ENCODE measurements at regions of chr2 and their contacts with region 1.

Region 1: GRCh38 chr2:241734467-241735208 is at the start of gene D2HGDH:
- DNase-seq: peak; percentile 97
- H3K4me3 ChIP-seq: peak within 1 kb of the TSS; percentile 66 to 93 (median 80)
- H3K27ac ChIP-seq: peak within 1 kb of the TSS; percentile 88 to 95 (median 93)
- H3K4me1 ChIP-seq: peaks cover 0 to 22% (median 12%) of the 10 kb centered on the region in 4 donors
- H3K27me3 ChIP-seq: no peaks in the 10 kb centered on the region
- CTCF ChIP-seq: no peak
- EP300 ChIP-seq: no peak
- POLR2A ChIP-seq: no peak
- total RNA-seq, gene D2HGDH: 10.7 to 26.9 (median 13.3) TPM

Region 2: GRCh38 chr2:240851078-240851991 is 883.3 kb before region 1 on chr2:
- intact Hi-C with region 1: loop called (anchors 5 kb)
- DNase-seq: peak; percentile 89
- H3K4me3 ChIP-seq: no peak overlapping the region
- H3K27ac ChIP-seq: no peak overlapping the region
- H3K4me1 ChIP-seq: no peaks in the 10 kb centered on the region
- H3K27me3 ChIP-seq: peaks cover 0 to 6% (median 0%) of the 10 kb centered on the region in 3 donors
- CTCF ChIP-seq: peak; percentile 83 to 96 (median 86)
- EP300 ChIP-seq: no peak
- POLR2A ChIP-seq: no peak

Region 3: GRCh38 chr2:241598480-241598879 is 136.2 kb before region 1 on chr2:
- intact Hi-C with region 1: no loop called
- DNase-seq: no peak
- H3K4me3 ChIP-seq: no peak overlapping the region
- H3K27ac ChIP-seq: no peak overlapping the region
- H3K4me1 ChIP-seq: no peaks in the 10 kb centered on the region
- H3K27me3 ChIP-seq: no peaks in the 10 kb centered on the region
- CTCF ChIP-seq: no peak
- EP300 ChIP-seq: no peak
- POLR2A ChIP-seq: no peak

Region 4: GRCh38 chr2:241692448-241692847 is 42.2 kb before region 1 on chr2:
- intact Hi-C with region 1: no loop called
- DNase-seq: no peak
- H3K4me3 ChIP-seq: no peak overlapping the region
- H3K27ac ChIP-seq: no peak overlapping the region
- H3K4me1 ChIP-seq: peaks cover 0 to 20% (median 16%) of the 10 kb centered on the region in 4 donors
- H3K27me3 ChIP-seq: no peaks in the 10 kb centered on the region
- CTCF ChIP-seq: no peak
- EP300 ChIP-seq: no peak
- POLR2A ChIP-seq: no peak

Region 5: GRCh38 chr2:241865957-241866789 is 131.5 kb after region 1 on chr2:
- intact Hi-C with region 1: no loop called
- DNase-seq: no peak
- H3K4me3 ChIP-seq: no peak overlapping the region
- H3K27ac ChIP-seq: no peak overlapping the region
- H3K4me1 ChIP-seq: peaks cover 0 to 17% (median 8%) of the 10 kb centered on the region in 4 donors
- H3K27me3 ChIP-seq: peaks cover 10 to 91% (median 61%) of the 10 kb centered on the region in 3 donors
- CTCF ChIP-seq: no peak
- EP300 ChIP-seq: no peak
- POLR2A ChIP-seq: no peak

Region 6: GRCh38 chr2:241877989-241878970 is 143.6 kb after region 1 on chr2:
- intact Hi-C with region 1: loop called (anchors 2 kb)
- DNase-seq: peak; percentile 84
- H3K4me3 ChIP-seq: no peak overlapping the region
- H3K27ac ChIP-seq: no peak overlapping the region
- H3K4me1 ChIP-seq: peaks cover 0 to 20% (median 16%) of the 10 kb centered on the region in 4 donors
- H3K27me3 ChIP-seq: no peaks in the 10 kb centered on the region
- CTCF ChIP-seq: peak; percentile 18 to 66 (median 52)
- EP300 ChIP-seq: no peak
- POLR2A ChIP-seq: no peak